Dendritic cell treated with granulocyte-macrophage colony-stimulating factor and Interleukin-4, amounts not matched to agents 40 ng/mL and 50 ng/mL, for 4 days (primary cell): ENCODE measurements at regions of chr1 and their contacts with region 1.

Region 1: GRCh38 chr1:221203224-221204054 is 324.2 kb downstream of the HLX start:
- H3K4me3 Mint-ChIP-seq: no peak overlapping the region
- H3K27ac Mint-ChIP-seq: no peak overlapping the region
- H3K4me1 Mint-ChIP-seq: no peaks in the 10 kb centered on the region
- H3K27me3 Mint-ChIP-seq: peaks cover 3% of the 10 kb centered on the region

Region 2: GRCh38 chr1:220810179-220810653 is 393.2 kb before region 1 on chr1:
- intact Hi-C with region 1: loop called (anchors 5 kb)
- H3K4me3 Mint-ChIP-seq: peak overlapping the region; percentile 63
- H3K27ac Mint-ChIP-seq: no peak overlapping the region
- H3K4me1 Mint-ChIP-seq: peaks cover 17% of the 10 kb centered on the region
- H3K27me3 Mint-ChIP-seq: no peaks in the 10 kb centered on the region

Region 3: DNA sequence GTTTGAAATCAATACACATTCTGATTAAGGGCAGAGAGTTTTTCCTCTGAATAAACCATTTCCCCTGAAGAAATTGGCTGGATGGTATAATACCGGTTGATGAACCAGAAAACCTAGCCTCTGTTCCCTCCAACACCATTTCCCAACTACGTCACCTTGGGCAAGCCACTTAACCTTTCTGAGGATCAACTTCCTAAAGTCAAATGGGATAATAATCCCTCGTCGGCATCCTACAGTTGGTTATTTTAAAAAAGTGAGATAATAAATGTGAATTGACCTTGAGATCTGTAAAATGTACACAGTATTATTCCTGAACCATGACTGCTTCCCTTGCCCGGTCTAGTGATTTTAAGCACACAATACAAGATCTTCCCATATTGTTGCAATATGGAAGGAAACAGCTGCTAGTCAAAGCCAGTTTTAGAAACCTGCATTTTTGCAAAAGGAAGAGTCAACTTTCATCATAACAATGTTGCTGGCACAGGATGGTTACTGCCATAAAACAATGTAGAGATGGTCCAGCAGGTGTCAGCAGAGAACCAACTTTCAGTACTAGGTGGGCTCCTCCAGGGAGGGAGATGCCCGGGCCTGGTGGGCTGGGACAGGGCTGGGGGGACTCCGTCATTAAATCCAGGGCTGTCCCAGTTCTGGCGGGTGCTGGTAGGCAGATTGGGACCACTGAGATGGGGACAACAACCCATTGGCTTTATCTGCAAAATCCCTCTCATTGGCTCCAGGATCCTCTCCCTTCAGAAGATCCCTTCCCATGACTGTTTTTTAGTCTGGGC is 329.4 kb before region 1 on chr1:
- intact Hi-C with region 1: loop called (anchors 2 kb)
- H3K4me3 Mint-ChIP-seq: no peak overlapping the region
- H3K27ac Mint-ChIP-seq: peak overlapping the region; percentile 56
- H3K4me1 Mint-ChIP-seq: peaks cover 45% of the 10 kb centered on the region
- H3K27me3 Mint-ChIP-seq: peaks cover 5% of the 10 kb centered on the region

Region 4: DNA sequence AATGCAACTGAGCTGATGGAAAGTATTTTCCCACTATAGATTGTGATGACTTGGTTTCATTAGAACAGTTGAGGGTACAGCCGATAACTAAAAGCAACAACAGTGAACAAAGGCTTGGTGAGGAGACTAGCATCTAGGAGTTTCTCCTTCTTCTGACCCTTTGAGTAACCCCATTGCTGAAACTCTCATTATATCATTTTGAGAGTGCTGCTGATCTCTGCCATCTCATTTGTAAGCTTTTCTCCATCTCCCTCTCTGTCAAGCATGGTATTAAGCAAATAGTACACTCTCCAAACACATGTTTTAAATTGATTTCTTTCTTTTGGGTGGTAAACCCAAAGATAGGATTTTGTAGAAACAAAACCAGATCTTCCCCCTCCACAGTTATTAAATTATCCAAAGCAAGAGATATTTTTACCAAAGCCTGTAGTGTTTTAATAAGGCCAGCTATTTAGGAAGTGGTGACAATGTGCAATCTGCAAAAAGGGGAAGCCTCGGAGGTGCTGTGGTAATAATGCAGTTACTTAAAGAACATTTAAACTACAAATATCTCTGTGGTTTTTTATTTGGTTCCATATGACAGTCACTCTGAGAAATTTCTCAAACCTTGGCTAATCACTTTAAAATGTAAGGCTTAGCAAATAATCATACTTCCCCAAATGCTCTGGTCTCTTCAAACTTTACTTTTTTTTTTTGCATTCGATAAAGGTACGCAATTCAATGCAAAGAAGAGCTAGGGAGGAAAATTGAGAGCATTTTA is 36.7 kb before region 1 on chr1:
- intact Hi-C with region 1: loop called (anchors 5 kb)
- H3K4me3 Mint-ChIP-seq: no peak overlapping the region
- H3K27ac Mint-ChIP-seq: peak overlapping the region; percentile 81
- H3K4me1 Mint-ChIP-seq: peaks cover 58% of the 10 kb centered on the region
- H3K27me3 Mint-ChIP-seq: peaks cover 48% of the 10 kb centered on the region

Region 5: GRCh38 chr1:221435504-221435904 is 232.1 kb after region 1 on chr1:
- intact Hi-C with region 1: loop called (anchors 10 kb)
- H3K4me3 Mint-ChIP-seq: no peak overlapping the region
- H3K27ac Mint-ChIP-seq: no peak overlapping the region
- H3K4me1 Mint-ChIP-seq: peaks cover 9% of the 10 kb centered on the region
- H3K27me3 Mint-ChIP-seq: no peaks in the 10 kb centered on the region